AG04449 (cell line): ENCODE measurements at regions of chr17 and their contacts with region 1.

Region 1: GRCh38 chr17:409848-410545 is 57.4 kb upstream of the RPH3AL start:
- DNase-seq: peak; percentile 77
- H3K4me3 ChIP-seq: peak overlapping the region; percentile 79
- CTCF ChIP-seq: peak; percentile 4

Region 2: GRCh38 chr17:385926-386876 is 23.8 kb before region 1 on chr17:
- CTCF ChIA-PET with region 1: interaction called, 10 read pairs
- POLR2A ChIA-PET with region 1: no interaction called
- DNase-seq: no peak
- H3K4me3 ChIP-seq: peak overlapping the region; percentile 52
- CTCF ChIP-seq: peak; percentile 78

Region 3: DNA sequence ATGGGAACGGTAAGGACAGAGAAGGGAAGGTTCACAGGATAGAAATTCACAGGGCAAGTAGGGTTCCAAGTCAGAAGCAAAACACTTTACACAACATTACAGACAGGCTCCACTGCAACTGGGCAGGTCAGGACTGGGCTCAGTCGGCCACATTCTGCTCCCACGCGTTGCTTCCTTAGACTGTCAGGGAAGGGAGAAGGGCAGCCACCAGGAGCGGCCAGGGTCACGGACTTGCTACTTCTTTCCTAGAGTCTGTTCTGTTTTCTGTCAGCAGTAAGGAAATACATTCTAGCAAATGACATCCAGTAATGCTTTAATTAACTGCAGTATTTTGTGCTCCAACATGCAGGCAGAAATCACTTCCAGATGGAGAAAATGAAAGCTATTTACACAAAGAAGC is 102.9 kb after region 1 on chr17:
- CTCF ChIA-PET with region 1: interaction called, 14 read pairs
- POLR2A ChIA-PET with region 1: no interaction called
- DNase-seq: no peak
- H3K4me3 ChIP-seq: peak overlapping the region; percentile 31
- CTCF ChIP-seq: no peak

Region 4: GRCh38 chr17:681738-682529 is 271.9 kb after region 1 on chr17:
- CTCF ChIA-PET with region 1: interaction called, 24 read pairs
- POLR2A ChIA-PET with region 1: no interaction called
- DNase-seq: peak; percentile 81
- H3K4me3 ChIP-seq: no peak overlapping the region
- CTCF ChIP-seq: no peak

Region 5: DNA sequence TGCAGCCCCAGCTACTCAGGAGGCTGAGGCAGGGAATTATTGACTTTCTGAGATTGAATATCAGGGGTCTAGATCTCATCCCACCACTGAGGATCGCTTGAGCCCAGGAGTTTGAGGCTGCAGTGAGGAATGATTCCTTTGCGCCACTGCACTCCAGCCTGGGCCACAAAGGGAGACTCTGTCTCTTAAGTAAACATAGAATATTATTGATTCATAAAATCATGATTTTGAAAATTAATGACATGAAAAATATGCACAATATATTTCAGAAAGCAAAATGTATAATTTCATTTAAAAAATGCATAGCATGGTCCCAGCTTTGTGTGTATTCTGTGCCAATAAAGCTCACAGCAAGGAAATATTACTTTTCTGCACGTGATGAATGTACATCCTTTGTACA is 306.2 kb after region 1 on chr17:
- CTCF ChIA-PET with region 1: interaction called, 15 read pairs
- POLR2A ChIA-PET with region 1: no interaction called
- DNase-seq: no peak
- H3K4me3 ChIP-seq: no peak overlapping the region
- CTCF ChIP-seq: no peak

Region 6: DNA sequence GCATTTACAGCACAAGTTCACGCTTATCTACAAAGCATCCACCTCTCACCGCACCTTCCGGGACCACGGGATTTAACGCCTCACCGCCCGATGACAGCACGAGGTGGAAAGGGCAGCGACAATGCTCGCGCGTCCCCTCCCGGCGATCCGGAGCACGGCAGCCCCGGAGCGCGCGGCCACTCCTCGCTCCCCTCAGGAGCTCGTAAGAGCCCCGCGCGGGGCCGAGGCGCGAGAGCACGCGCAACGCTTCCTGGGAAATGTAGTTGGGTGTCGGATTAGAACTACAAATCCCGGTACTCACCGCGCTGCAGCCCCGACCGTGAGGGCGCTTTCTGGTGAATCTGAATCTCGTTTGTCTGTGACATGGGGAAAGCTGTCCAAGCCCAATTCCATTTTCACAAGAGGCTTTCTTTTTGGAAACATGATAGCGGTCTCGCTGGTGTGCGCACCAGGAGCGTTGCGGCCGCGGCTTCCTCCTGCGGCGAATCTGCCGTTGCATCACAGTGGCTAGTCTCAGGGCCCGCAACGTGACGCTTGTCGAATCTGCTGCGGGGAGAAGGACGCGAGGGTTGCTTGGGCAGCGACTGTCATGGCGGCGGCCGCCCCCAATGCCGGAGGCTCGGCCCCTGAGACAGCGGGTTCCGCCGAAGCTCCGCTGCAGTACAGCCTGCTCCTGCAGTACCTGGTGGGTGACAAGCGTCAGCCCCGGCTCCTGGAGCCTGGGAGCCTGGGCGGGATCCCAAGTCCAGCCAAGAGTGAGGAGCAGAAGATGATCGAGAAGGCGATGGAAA is 586.8 kb after region 1 on chr17 and contains the start of gene TIMM22:
- CTCF ChIA-PET with region 1: interaction called, 11 read pairs
- POLR2A ChIA-PET with region 1: interaction called, 3 read pairs
- DNase-seq: peak; percentile 88
- H3K4me3 ChIP-seq: peak within 1 kb of the TSS; percentile 100
- CTCF ChIP-seq: peak; percentile 92

Region 7: GRCh38 chr17:1251866-1252608 is 842.0 kb after region 1 on chr17:
- CTCF ChIA-PET with region 1: no interaction called
- POLR2A ChIA-PET with region 1: no interaction called
- DNase-seq: no peak
- H3K4me3 ChIP-seq: no peak overlapping the region
- CTCF ChIP-seq: no peak